GM12878 (cell line): ENCODE measurements at regions of chr2 and their contacts with region 1.

Region 1: GRCh38 chr2:109736177-109736827 is 57.8 kb upstream of the RGPD5 start:
- DNase-seq: no peak
- ATAC-seq: peak; percentile 82
- H3K4me3 ChIP-seq: no peak overlapping the region
- H3K27ac ChIP-seq: no peak overlapping the region
- H3K4me1 ChIP-seq: no peaks in the 10 kb centered on the region
- H3K27me3 ChIP-seq: no peaks in the 10 kb centered on the region
- CTCF ChIP-seq: peak; percentile 58 to 67 (median 58); a peak in 5 of 6 replicates
- EP300 ChIP-seq: no peak
- POLR2A ChIP-seq: no peak
- RAD21 ChIP-seq: peak; percentile 77

Region 2: DNA sequence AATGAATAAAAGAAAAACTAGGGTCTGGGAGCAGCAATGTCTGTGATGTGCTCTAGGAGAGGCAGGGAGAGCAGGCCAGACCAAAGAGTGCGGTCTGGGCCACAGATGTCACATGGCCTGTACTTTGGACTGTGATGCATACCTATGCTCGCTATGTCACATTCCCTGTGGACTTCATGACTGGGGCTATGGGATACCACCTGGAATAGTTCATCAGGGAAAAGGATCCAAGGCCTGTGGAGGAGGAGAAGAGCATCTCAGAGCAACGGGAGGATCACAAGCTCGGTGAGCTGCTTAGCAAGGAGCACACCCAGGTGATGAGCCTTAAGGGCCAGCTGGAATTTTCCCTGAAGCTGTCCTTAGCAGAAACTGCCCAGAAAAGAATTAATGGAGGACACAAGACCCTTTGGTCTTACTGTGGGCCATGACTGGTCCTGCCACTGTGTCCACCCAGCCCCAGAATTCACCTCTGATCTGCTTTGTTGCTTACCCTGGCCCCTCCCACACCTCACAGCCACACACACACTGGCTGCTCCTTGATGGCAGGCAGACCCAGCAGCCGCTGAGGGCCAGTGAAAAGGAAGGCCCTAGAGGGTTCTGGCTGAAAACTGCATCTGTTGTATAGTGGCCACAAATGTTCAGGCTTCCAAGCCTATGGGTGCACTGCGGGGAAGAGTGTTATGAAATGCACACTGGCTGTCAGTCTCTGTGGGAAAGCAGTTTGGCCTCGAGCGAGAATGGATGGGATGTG is 1312.6 kb before region 1 on chr2:
- CTCF ChIA-PET with region 1: no interaction called
- POLR2A ChIA-PET with region 1: no interaction called
- RAD21 ChIA-PET with region 1: no interaction called
- SMC1A ChIA-PET with region 1: no interaction called
- in situ Hi-C with region 1: no loop called
- intact Hi-C with region 1: no loop called
- DNase-seq: no peak
- ATAC-seq: no peak
- H3K4me3 ChIP-seq: no peak overlapping the region
- H3K27ac ChIP-seq: no peak overlapping the region
- H3K4me1 ChIP-seq: no peaks in the 10 kb centered on the region
- H3K27me3 ChIP-seq: no peaks in the 10 kb centered on the region
- CTCF ChIP-seq: no peak
- EP300 ChIP-seq: no peak
- POLR2A ChIP-seq: no peak
- RAD21 ChIP-seq: no peak

Region 3: DNA sequence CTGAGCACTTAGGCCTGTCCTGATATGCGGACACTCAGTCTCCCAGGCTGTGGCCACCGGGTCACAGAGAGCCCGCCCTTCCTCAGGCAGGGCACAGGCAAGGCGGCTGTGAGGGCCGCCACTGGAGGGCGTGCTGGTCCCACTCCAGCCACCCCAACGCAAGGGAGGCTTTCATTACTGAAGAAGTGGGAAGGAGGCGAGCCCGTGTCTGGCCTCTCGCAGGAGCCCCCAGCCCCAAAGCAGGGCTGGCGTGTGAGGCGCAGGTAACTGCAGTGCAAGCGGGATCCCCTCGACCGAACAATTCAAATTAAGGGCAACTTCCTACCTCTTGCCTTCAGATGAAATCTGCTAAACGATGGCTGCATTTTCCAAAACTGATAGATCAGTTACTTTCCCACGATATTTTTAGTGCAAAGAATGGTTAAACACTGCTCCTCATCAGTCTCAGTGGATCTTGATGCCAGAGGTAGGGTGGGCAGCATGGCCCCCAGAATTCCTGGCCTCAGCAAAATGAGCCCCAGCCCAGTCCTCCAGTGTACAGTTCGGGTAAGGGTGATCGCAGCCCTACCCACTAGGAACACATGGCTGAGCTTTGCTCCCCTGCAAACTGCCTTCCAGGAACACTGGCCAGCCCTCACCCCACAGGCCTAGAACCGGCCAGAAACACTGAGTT is 219.7 kb before region 1 on chr2:
- CTCF ChIA-PET with region 1: interaction called, 3 read pairs
- POLR2A ChIA-PET with region 1: no interaction called
- RAD21 ChIA-PET with region 1: interaction called, 4 read pairs
- SMC1A ChIA-PET with region 1: interaction called, 3 read pairs
- in situ Hi-C with region 1: no loop called
- intact Hi-C with region 1: loop called (anchors 1 kb)
- DNase-seq: no peak
- ATAC-seq: peak; percentile 62
- H3K4me3 ChIP-seq: no peak overlapping the region
- H3K27ac ChIP-seq: no peak overlapping the region
- H3K4me1 ChIP-seq: peaks cover 29% of the 10 kb centered on the region
- H3K27me3 ChIP-seq: no peaks in the 10 kb centered on the region
- CTCF ChIP-seq: peak; percentile 74 to 89 (median 89)
- EP300 ChIP-seq: no peak
- POLR2A ChIP-seq: no peak
- RAD21 ChIP-seq: peak; percentile 80

Region 4: DNA sequence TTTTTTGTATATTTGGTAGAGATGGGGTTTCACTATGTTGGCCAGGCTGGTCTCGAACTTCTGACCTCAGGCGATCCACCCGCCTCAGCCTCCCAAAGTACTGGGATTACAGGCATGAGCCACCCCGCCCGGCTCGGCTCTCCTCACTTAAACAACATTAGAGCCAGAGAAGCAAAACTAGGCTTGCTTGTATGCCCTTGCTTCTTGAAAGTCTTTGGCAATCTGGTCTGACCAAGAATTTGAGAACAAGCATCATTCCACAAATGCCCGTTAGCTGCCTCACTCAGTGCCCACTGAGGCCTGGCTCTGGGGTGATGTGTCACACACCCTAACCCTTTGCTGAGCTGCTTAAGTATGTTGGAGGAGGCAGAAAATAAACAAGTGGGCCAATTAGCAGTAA is 88.7 kb before region 1 on chr2:
- CTCF ChIA-PET with region 1: no interaction called
- POLR2A ChIA-PET with region 1: no interaction called
- RAD21 ChIA-PET with region 1: no interaction called
- SMC1A ChIA-PET with region 1: no interaction called
- in situ Hi-C with region 1: no loop called
- intact Hi-C with region 1: no loop called
- DNase-seq: no peak
- ATAC-seq: no peak
- H3K4me3 ChIP-seq: no peak overlapping the region
- H3K27ac ChIP-seq: no peak overlapping the region
- H3K4me1 ChIP-seq: peaks cover 14% of the 10 kb centered on the region
- H3K27me3 ChIP-seq: no peaks in the 10 kb centered on the region
- CTCF ChIP-seq: no peak
- EP300 ChIP-seq: no peak
- POLR2A ChIP-seq: no peak
- RAD21 ChIP-seq: no peak